HepG2 (cell line): ENCODE measurements at regions of chr1 and their contacts with region 1.

Region 1: DNA sequence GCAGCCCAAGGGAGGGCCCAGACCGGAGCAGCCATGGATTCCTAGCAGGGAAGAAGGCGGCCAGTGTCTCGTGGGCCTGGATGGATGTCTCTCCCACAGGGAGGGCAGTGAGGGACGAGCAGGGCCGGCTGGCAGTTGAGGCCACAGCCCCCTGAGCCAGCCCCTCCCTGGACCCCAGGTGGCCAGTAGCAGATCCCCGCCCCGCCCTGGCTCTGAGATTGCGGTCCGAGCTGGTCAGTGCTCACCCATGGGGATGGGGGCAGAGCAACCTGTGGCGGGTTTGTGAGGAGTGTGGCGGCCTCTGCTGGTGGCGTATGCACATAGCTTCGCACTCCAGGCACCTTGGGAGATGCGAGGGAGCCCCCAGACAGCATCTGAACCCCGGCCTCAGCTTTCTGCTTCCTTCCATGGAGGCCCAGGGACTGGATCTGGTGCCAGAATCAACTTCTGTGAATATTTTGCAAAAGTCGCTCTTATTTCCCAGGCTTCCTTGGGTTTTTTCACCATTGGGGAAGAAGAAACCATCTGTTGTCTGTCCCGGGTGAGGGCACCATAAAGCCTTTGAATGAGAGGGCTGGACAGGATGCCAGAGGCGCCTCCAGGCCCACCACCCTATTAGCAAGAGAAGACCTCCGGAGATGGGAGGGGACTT is 8.4 kb upstream of the KCNN3 start:
- DNase-seq: peak; percentile 48
- ATAC-seq: peak; percentile 88
- H3K4me3 ChIP-seq: peak overlapping the region in 2 of 3 experiments; percentile 36 to 62; a peak in 1 of 6 replicates
- H3K27ac ChIP-seq: no peak overlapping the region
- H3K4me1 ChIP-seq: peaks cover 19% of the 10 kb centered on the region
- H3K27me3 ChIP-seq: peaks cover 2 to 40% of the 10 kb centered on the region in 2 experiments; a peak in 4 of 5 replicates
- CTCF ChIP-seq: peak; percentile 98
- EP300 ChIP-seq: no peak
- POLR2A ChIP-seq: no peak
- RAD21 ChIP-seq: peak; percentile 92

Region 2: GRCh38 chr1:154533952-154534844 is 344.3 kb before region 1 on chr1:
- CTCF ChIA-PET with region 1: no interaction called
- POLR2A ChIA-PET with region 1: no interaction called
- in situ Hi-C with region 1: no loop called
- intact Hi-C with region 1: loop called (anchors 1 kb)
- DNase-seq: peak; percentile 59
- ATAC-seq: peak; percentile 82
- H3K4me3 ChIP-seq: no peak overlapping the region
- H3K27ac ChIP-seq: no peak overlapping the region
- H3K4me1 ChIP-seq: no peaks in the 10 kb centered on the region
- H3K27me3 ChIP-seq: no peaks in the 10 kb centered on the region
- CTCF ChIP-seq: peak; percentile 81
- EP300 ChIP-seq: no peak
- POLR2A ChIP-seq: no peak
- RAD21 ChIP-seq: peak; percentile 49; the same call in 1 of the 2 replicates

Region 3: GRCh38 chr1:154765970-154766369 is 112.5 kb before region 1 on chr1:
- CTCF ChIA-PET with region 1: no interaction called
- POLR2A ChIA-PET with region 1: no interaction called
- in situ Hi-C with region 1: loop called (anchors 5 kb)
- intact Hi-C with region 1: loop called (anchors 1 kb)
- DNase-seq: peak; percentile 35
- ATAC-seq: peak; percentile 88
- H3K4me3 ChIP-seq: no peak overlapping the region
- H3K27ac ChIP-seq: no peak overlapping the region
- H3K4me1 ChIP-seq: no peaks in the 10 kb centered on the region
- H3K27me3 ChIP-seq: peaks cover 0 to 1% of the 10 kb centered on the region in 2 experiments; a peak in 1 of 5 replicates
- CTCF ChIP-seq: peak; percentile 61
- EP300 ChIP-seq: no peak
- POLR2A ChIP-seq: no peak
- RAD21 ChIP-seq: no peak